Dendritic cell treated with granulocyte-macrophage colony-stimulating factor and Interleukin-4, amounts not matched to agents 40 ng/mL and 50 ng/mL, for 4 days (primary cell): ENCODE measurements at regions of chr11 and their contacts with region 1.

Region 1: GRCh38 chr11:128238521-128239265 is 348.7 kb downstream of the ETS1 start:
- H3K4me3 Mint-ChIP-seq: peak overlapping the region; percentile 62
- H3K27ac Mint-ChIP-seq: peak overlapping the region; percentile 83
- H3K4me1 Mint-ChIP-seq: peaks cover 31% of the 10 kb centered on the region
- H3K27me3 Mint-ChIP-seq: no peaks in the 10 kb centered on the region

Region 2: GRCh38 chr11:128271401-128271800 is 32.7 kb after region 1 on chr11:
- intact Hi-C with region 1: loop called (anchors 5 kb)
- H3K4me3 Mint-ChIP-seq: no peak overlapping the region
- H3K27ac Mint-ChIP-seq: peak overlapping the region; percentile 92
- H3K4me1 Mint-ChIP-seq: peaks cover 53% of the 10 kb centered on the region
- H3K27me3 Mint-ChIP-seq: no peaks in the 10 kb centered on the region

Region 3: GRCh38 chr11:128522055-128522942 is 283.6 kb after region 1 on chr11:
- intact Hi-C with region 1: no loop called
- H3K4me3 Mint-ChIP-seq: peak overlapping the region; percentile 86
- H3K27ac Mint-ChIP-seq: peak overlapping the region; percentile 88
- H3K4me1 Mint-ChIP-seq: peaks cover 35% of the 10 kb centered on the region
- H3K27me3 Mint-ChIP-seq: peaks cover 12% of the 10 kb centered on the region

Region 4: DNA sequence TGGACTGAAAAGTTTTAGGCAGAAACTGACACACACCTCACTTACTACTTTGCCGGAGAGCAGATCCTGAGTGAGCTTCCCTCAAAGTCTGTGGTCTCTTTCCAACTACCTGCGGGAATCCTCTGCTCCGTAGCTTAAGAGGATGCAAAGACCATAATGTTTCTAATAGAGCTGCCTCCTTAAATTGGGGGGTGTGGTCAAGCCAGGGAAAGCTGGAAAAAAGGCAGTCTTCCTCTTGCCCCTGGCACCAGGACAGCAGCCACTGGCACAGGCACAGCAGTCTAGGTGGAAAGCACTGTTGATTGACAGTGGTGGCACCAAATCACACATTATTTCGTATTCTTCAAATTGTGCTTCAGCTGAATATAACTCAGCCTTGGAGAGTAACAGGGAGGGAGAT is 348.8 kb after region 1 on chr11 and contains the start of gene ETS1:
- intact Hi-C with region 1: no loop called
- H3K4me3 Mint-ChIP-seq: no peak within 1 kb of the TSS
- H3K27ac Mint-ChIP-seq: no peak within 1 kb of the TSS
- H3K4me1 Mint-ChIP-seq: peaks cover 14% of the 10 kb centered on the region
- H3K27me3 Mint-ChIP-seq: peaks cover 13% of the 10 kb centered on the region

Region 5: GRCh38 chr11:129743111-129743815 is 1504.6 kb after region 1 on chr11:
- intact Hi-C with region 1: loop called (anchors 10 kb)
- H3K4me3 Mint-ChIP-seq: no peak overlapping the region
- H3K27ac Mint-ChIP-seq: no peak overlapping the region
- H3K4me1 Mint-ChIP-seq: no peaks in the 10 kb centered on the region
- H3K27me3 Mint-ChIP-seq: peaks cover 16% of the 10 kb centered on the region